Activated naive CD4-positive, alpha-beta T cell treated with anti-CD3 and anti-CD28 coated beads for 36 hours (primary cell): ENCODE measurements at regions of chr16 and their contacts with region 1.

Region 1: GRCh38 chr16:67311607-67312488 is 14.7 kb downstream of the KCTD19 start:
- DNase-seq: peak; percentile 98
- H3K4me3 Mint-ChIP-seq: peak overlapping the region; percentile 13
- H3K27ac Mint-ChIP-seq: peak overlapping the region; percentile 96
- H3K4me1 Mint-ChIP-seq: peaks cover 44% of the 10 kb centered on the region
- H3K27me3 Mint-ChIP-seq: no peaks in the 10 kb centered on the region

Region 2: GRCh38 chr16:66984892-66985311 is 326.9 kb before region 1 on chr16:
- CTCF ChIA-PET with region 1: no interaction called
- intact Hi-C with region 1: loop called (anchors 1 kb)
- DNase-seq: peak; percentile 81
- H3K4me3 Mint-ChIP-seq: no peak overlapping the region
- H3K27ac Mint-ChIP-seq: peak overlapping the region; percentile 96
- H3K4me1 Mint-ChIP-seq: peaks cover 30% of the 10 kb centered on the region
- H3K27me3 Mint-ChIP-seq: no peaks in the 10 kb centered on the region

Region 3: DNA sequence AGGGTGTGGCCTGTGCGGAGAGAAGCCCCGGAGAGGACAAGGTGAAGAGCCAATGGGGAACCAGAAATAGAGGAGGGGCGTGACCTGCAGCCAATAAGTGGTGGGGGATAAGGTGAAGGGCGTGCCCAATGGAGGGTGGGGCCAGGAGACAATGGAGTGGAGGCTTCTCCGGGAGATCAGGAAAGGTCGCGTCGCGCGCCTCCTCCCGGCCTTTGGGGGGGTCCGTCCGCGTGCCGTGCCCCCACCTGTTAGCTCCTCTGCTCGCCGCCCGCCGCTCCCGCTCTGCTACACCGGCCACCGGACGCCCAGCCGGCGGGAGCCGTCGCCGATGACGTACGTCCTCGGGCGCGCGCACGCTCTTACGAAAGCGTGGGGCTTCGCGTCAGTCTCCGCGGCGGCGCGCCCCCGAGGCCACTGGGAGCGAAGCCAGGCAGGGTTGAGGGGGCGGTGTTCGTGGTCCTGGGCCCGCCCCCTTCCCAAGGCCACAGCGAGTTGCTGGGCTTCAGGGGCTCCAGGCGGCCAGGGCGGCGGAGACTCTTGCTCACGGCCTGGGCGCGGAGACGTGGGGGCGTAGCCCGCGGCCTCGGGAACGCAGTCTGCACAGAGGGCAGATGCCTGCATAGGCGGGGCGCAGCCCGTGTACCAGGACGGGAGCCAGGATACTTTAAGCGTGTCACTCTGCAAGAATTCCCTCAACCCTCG is 128.1 kb before region 1 on chr16 and contains the start of gene MATCAP1:
- CTCF ChIA-PET with region 1: no interaction called
- intact Hi-C with region 1: loop called (anchors 2 kb)
- DNase-seq: peak; percentile 97
- H3K4me3 Mint-ChIP-seq: peak within 1 kb of the TSS; percentile 50
- H3K27ac Mint-ChIP-seq: no peak within 1 kb of the TSS
- H3K4me1 Mint-ChIP-seq: peaks cover 12% of the 10 kb centered on the region
- H3K27me3 Mint-ChIP-seq: peaks cover 17% of the 10 kb centered on the region
- total RNA-seq, gene MATCAP1: 21.9 to 24.0 TPM

Region 4: DNA sequence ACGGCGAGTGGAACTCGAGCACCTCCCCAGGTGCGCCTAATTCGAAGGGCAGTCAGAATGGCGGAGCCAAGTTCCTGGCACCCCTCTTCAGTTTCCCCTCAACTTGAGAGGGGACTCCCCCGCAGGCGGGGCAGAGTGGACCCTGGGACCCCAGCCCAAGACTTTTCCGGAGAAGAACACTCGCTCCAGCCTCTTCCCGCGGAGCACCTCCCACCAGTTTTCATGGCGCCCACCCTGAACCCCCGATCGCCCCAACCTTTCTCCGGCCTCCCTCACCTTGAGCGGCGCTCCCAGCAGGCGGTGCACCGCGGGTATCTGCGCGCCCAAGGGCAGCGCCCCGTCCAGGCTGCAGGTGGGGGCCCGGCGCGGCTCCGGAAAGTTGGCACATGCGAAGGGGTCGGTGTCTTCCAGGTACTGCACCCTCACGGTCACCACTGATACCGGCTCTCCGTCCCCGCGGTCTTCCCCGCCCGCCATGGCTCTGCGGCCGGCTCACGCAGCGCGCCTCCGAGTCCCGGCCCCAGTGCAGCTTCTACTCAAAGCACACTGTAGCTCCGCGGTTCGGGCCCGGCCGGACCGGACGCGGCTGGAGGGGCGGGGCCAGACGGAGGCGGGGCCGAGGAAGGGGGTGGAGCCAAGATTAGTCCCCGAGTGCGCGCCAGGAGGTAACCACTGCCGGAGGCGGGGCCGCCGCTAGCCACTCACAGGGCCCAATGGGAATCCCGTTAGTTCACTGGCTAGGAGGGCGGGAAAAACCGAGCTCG is 64.7 kb before region 1 on chr16 and contains the start of gene FHOD1:
- CTCF ChIA-PET with region 1: no interaction called
- intact Hi-C with region 1: loop called (anchors 1 kb)
- DNase-seq: peak; percentile 99
- H3K4me3 Mint-ChIP-seq: peak within 1 kb of the TSS; percentile 89
- H3K27ac Mint-ChIP-seq: peak within 1 kb of the TSS; percentile 76
- H3K4me1 Mint-ChIP-seq: peaks cover 51% of the 10 kb centered on the region
- H3K27me3 Mint-ChIP-seq: peaks cover 8% of the 10 kb centered on the region
- total RNA-seq, gene FHOD1: 70.7 to 73.7 TPM

Region 5: GRCh38 chr16:67326472-67327309 is 14.8 kb after region 1 on chr16 and contains the starts of genes KCTD19 and LRRC36:
- CTCF ChIA-PET with region 1: interaction called, 10 read pairs
- intact Hi-C with region 1: no loop called
- DNase-seq: peak; percentile 73
- H3K4me3 Mint-ChIP-seq: peak within 1 kb of the TSS; percentile 79
- H3K27ac Mint-ChIP-seq: no peak within 1 kb of the TSS
- H3K4me1 Mint-ChIP-seq: peaks cover 8% of the 10 kb centered on the region
- H3K27me3 Mint-ChIP-seq: peaks cover 45% of the 10 kb centered on the region
- total RNA-seq, gene KCTD19: 1.0 to 1.3 TPM
- total RNA-seq, gene LRRC36: 0.64 TPM in 1 of 2 experiments, not detected in the other

Region 6: GRCh38 chr16:67561824-67562525 is 250.1 kb after region 1 on chr16:
- CTCF ChIA-PET with region 1: no interaction called
- intact Hi-C with region 1: loop called (anchors 1 kb)
- DNase-seq: peak; percentile 98
- H3K4me3 Mint-ChIP-seq: peak overlapping the region; percentile 78
- H3K27ac Mint-ChIP-seq: peak overlapping the region; percentile 86
- H3K4me1 Mint-ChIP-seq: peaks cover 45% of the 10 kb centered on the region
- H3K27me3 Mint-ChIP-seq: no peaks in the 10 kb centered on the region

Region 7: GRCh38 chr16:68756250-68756915 is 1444.5 kb after region 1 on chr16:
- CTCF ChIA-PET with region 1: no interaction called
- intact Hi-C with region 1: loop called (anchors 5 kb)
- DNase-seq: peak; percentile 93
- H3K4me3 Mint-ChIP-seq: peak overlapping the region; percentile 19
- H3K27ac Mint-ChIP-seq: peak overlapping the region; percentile 97
- H3K4me1 Mint-ChIP-seq: peaks cover 61% of the 10 kb centered on the region
- H3K27me3 Mint-ChIP-seq: no peaks in the 10 kb centered on the region